PC-3 (cell line): ENCODE measurements at regions of chr7 and their contacts with region 1.

Region 1: GRCh38 chr7:18216270-18216669 is 188.6 kb upstream of the PRPS1L1 start:
- DNase-seq: no peak
- ATAC-seq: no peak
- H3K4me3 ChIP-seq: no peak overlapping the region
- H3K27ac ChIP-seq: no peak overlapping the region
- H3K4me1 ChIP-seq: peaks cover 7% of the 10 kb centered on the region; the same call in 1 of the 2 replicates
- H3K27me3 ChIP-seq: no peaks in the 10 kb centered on the region
- CTCF ChIP-seq: no peak

Region 2: GRCh38 chr7:18191341-18191740 is 24.9 kb before region 1 on chr7:
- CTCF ChIA-PET with region 1: no interaction called
- POLR2A ChIA-PET with region 1: no interaction called
- intact Hi-C with region 1: no loop called
- DNase-seq: no peak
- ATAC-seq: no peak
- H3K4me3 ChIP-seq: no peak overlapping the region
- H3K27ac ChIP-seq: no peak overlapping the region
- H3K4me1 ChIP-seq: no peaks in the 10 kb centered on the region
- H3K27me3 ChIP-seq: no peaks in the 10 kb centered on the region
- CTCF ChIP-seq: no peak

Region 3: DNA sequence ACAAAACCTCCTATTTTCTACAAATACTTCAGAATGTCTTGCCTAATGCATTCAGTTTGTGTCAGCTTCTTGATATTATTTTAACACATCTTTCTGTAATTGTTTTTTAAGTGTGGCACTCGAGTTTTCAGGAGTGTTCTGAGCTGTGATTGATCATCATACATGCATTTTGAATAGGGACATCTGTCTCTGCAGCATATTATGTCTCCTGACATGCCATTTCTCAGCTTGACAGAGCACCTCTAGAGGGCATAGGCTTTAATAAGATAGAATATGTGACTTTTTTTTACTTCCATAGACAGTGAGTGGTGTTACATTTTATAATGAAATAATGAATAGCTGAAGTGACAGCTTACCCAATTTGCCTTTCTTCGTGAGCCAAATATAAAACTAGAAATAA is 60.1 kb after region 1 on chr7:
- CTCF ChIA-PET with region 1: no interaction called
- POLR2A ChIA-PET with region 1: no interaction called
- intact Hi-C with region 1: loop called (anchors 5 kb)
- DNase-seq: no peak
- ATAC-seq: peak; percentile 49; the same call in 1 of the 2 replicates
- H3K4me3 ChIP-seq: no peak overlapping the region
- H3K27ac ChIP-seq: no peak overlapping the region
- H3K4me1 ChIP-seq: no peaks in the 10 kb centered on the region
- H3K27me3 ChIP-seq: no peaks in the 10 kb centered on the region
- CTCF ChIP-seq: peak; percentile 36